Activated CD4-positive, alpha-beta T cell treated with anti-CD3 and anti-CD28 coated beads, Interleukin-2, amount 10 ng/mL, durations not matched to agents 24 days and 14 days (primary cell): ENCODE measurements at regions of chr5 and their contacts with region 1.

Region 1: DNA sequence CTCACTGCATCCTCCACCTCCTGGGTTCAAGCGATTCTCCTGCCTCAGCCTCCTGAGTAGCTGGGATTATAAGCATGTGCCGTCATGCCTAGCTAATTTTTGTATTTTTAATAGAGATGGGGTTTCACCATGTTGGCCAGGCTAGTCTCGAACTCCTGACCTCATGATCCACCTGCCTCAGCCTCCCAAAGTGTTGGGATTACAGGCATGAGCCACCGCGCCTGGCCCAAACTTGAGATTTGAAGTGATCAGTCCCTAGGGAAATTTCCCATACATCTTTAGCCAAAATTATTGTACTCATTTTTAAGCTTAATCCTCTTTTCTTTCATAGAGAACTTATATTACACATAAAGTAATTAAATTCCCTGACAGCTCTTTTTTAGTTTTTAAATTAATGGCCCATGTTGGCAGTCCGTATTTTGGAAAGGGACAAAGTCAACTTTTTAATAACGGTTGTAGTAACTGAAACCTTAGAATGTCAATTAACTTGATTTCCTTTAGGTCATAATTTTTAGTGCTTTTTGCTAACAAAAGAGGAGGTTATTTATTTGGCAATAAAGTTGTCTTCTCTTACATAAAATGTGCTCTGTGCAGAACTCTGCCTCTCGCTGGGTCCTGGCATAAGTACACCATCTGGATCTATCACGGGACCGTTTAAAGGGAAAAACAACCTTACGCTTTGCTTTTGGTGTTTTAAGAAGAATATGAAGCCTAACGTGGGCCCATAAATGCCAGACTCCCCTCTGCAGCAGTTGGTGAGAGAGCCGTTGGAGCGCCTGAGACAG is 142.3 kb upstream of the OTULINL start:
- DNase-seq: no peak
- H3K4me3 Mint-ChIP-seq: no peak overlapping the region
- H3K27ac Mint-ChIP-seq: no peak overlapping the region
- H3K4me1 Mint-ChIP-seq: peaks cover 27% of the 10 kb centered on the region
- H3K27me3 Mint-ChIP-seq: peaks cover 5% of the 10 kb centered on the region

Region 2: GRCh38 chr5:14424011-14424685 is 15.1 kb before region 1 on chr5:
- intact Hi-C with region 1: loop called (anchors 1 kb)
- DNase-seq: peak; percentile 70
- H3K4me3 Mint-ChIP-seq: peak overlapping the region; percentile 24
- H3K27ac Mint-ChIP-seq: peak overlapping the region; percentile 73
- H3K4me1 Mint-ChIP-seq: peaks cover 22% of the 10 kb centered on the region
- H3K27me3 Mint-ChIP-seq: no peaks in the 10 kb centered on the region

Region 3: GRCh38 chr5:14476786-14477435 is 37.6 kb after region 1 on chr5:
- intact Hi-C with region 1: loop called (anchors 5 kb)
- DNase-seq: no peak
- H3K4me3 Mint-ChIP-seq: no peak overlapping the region
- H3K27ac Mint-ChIP-seq: no peak overlapping the region
- H3K4me1 Mint-ChIP-seq: peaks cover 9% of the 10 kb centered on the region
- H3K27me3 Mint-ChIP-seq: no peaks in the 10 kb centered on the region

Region 4: GRCh38 chr5:14505310-14506032 is 66.2 kb after region 1 on chr5:
- intact Hi-C with region 1: no loop called
- DNase-seq: no peak
- H3K4me3 Mint-ChIP-seq: no peak overlapping the region
- H3K27ac Mint-ChIP-seq: no peak overlapping the region
- H3K4me1 Mint-ChIP-seq: no peaks in the 10 kb centered on the region
- H3K27me3 Mint-ChIP-seq: no peaks in the 10 kb centered on the region